ENCODE measurements at regions of chr11 and their contacts with region 1.

Region 1: GRCh38 chr11:87290304-87290922 is 252.7 kb downstream of the TMEM135 start:
- DNase-seq: peak; percentile 64
- ATAC-seq: peak; percentile 63
- H3K4me3 ChIP-seq: no peak overlapping the region
- H3K27ac ChIP-seq: no peak overlapping the region
- H3K4me1 ChIP-seq: no peaks in the 10 kb centered on the region
- H3K27me3 ChIP-seq: no peaks in the 10 kb centered on the region
- CTCF ChIP-seq: peak; percentile 80
- POLR2A ChIP-seq: no peak
- RAD21 ChIP-seq: peak; percentile 82

Region 2: DNA sequence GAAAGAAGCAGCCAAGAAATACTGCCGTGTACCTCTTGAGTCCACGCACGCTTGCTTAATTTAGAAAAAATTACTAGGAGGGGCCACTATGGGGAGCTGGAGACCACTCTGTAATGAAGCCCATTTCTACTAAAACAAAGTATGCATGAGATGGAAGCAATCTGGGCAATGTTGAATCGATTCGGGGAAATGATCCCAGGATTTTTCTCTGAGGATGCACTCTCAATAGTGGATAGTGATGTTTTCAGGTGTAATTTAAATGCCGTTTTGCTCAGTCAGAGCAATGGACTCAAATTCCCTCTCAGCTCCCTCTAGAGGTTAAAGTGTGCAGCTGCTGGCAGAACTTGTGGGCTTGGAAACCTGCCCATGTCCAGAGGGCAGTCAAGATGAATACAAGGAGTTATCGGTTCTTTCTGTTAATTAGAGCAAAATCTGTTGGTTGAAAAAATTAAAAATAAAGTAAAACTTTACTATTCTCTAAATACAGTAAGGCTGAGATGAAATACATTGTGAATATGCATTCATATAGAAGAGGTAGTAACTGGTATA is 682.1 kb before region 1 on chr11:
- CTCF ChIA-PET with region 1: no interaction called
- POLR2A ChIA-PET with region 1: no interaction called
- dilution Hi-C with region 1: no loop called
- in situ Hi-C with region 1: loop called (anchors 25 kb)
- intact Hi-C with region 1: no loop called
- DNase-seq: peak; percentile 80
- ATAC-seq: peak; percentile 73
- H3K4me3 ChIP-seq: no peak overlapping the region
- H3K27ac ChIP-seq: no peak overlapping the region
- H3K4me1 ChIP-seq: peaks cover 5% of the 10 kb centered on the region
- H3K27me3 ChIP-seq: no peaks in the 10 kb centered on the region
- CTCF ChIP-seq: peak; percentile 75
- POLR2A ChIP-seq: no peak
- RAD21 ChIP-seq: peak; percentile 59

Region 3: DNA sequence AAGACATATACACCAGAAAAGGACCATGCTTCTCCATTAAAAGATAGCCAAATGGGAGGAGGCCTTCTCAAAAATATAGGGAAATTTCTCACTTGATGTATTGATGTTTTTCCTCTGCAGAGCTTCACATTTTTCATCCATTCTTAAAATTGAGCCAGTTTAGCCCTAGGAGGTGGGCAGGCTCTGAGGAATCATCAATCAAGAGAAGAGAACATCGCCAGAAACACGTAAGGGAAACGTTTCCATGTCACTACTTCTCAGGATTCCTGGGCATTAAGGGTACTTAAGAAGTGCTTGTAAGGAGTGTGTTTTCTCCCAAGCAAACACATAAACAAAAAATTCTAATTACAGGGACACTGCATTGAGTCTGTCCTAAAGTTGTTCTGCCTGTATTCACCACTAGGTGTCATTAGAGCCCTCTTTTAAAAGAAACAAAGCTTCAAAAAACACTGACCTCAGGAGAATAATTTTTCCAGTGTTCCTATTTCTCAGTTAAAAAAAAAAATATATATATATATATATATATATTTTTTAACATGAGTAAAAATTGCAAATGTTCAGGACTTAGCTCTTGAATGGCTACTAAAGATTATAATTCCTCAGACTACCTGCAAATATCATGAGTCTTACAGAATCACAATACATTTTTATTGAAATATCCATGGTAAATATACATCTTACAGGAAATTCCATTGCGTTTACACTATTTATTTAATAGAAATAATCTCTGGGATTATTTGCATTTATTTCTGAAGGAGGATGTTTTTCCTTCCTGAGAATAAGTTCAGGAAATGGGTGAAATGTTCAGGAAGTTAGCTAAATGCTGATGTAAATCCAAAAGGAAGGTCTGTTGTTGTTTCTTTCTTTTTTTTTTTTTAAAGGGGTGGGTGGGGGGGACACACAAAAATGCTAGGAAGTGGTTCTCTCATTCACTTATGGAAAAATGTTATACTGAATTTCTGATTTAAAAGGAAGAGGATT is 351.2 kb before region 1 on chr11:
- CTCF ChIA-PET with region 1: interaction called, 9 read pairs
- POLR2A ChIA-PET with region 1: no interaction called
- dilution Hi-C with region 1: no loop called
- in situ Hi-C with region 1: loop called (anchors 5 kb)
- intact Hi-C with region 1: loop called (anchors 1 kb)
- DNase-seq: peak; percentile 68
- ATAC-seq: peak; percentile 43
- H3K4me3 ChIP-seq: no peak overlapping the region
- H3K27ac ChIP-seq: no peak overlapping the region
- H3K4me1 ChIP-seq: peaks cover 23% of the 10 kb centered on the region
- H3K27me3 ChIP-seq: no peaks in the 10 kb centered on the region
- CTCF ChIP-seq: peak; percentile 74
- POLR2A ChIP-seq: no peak
- RAD21 ChIP-seq: peak; percentile 73

Region 4: DNA sequence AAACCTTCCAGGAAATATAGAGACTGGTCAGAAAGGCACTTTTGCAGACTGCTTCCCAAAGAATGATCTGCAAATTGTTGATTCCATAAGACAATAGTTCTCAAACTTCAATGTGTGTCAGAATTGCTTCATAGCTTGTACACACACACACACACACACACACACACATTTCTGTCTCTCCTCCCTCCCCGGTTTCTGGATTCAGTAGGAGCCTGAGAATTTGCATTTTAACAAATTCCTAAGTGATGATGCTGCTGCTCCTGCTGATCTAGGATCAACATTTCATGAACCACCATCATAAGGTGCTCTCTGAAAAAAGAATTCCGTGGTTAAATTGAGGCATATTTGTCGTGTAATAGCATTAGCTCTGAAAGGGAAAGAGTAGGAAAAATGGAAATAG is 299.9 kb before region 1 on chr11:
- CTCF ChIA-PET with region 1: interaction called, 3 read pairs
- POLR2A ChIA-PET with region 1: no interaction called
- dilution Hi-C with region 1: no loop called
- in situ Hi-C with region 1: no loop called
- intact Hi-C with region 1: loop called (anchors 2 kb)
- DNase-seq: peak; percentile 79
- ATAC-seq: peak; percentile 76
- H3K4me3 ChIP-seq: no peak overlapping the region
- H3K27ac ChIP-seq: no peak overlapping the region
- H3K4me1 ChIP-seq: peaks cover 6% of the 10 kb centered on the region
- H3K27me3 ChIP-seq: no peaks in the 10 kb centered on the region; the same call in 1 of the 2 replicates
- CTCF ChIP-seq: no peak
- POLR2A ChIP-seq: no peak
- RAD21 ChIP-seq: no peak